ENCODE measurements at regions of chr19 and their contacts with region 1.

Region 1: DNA sequence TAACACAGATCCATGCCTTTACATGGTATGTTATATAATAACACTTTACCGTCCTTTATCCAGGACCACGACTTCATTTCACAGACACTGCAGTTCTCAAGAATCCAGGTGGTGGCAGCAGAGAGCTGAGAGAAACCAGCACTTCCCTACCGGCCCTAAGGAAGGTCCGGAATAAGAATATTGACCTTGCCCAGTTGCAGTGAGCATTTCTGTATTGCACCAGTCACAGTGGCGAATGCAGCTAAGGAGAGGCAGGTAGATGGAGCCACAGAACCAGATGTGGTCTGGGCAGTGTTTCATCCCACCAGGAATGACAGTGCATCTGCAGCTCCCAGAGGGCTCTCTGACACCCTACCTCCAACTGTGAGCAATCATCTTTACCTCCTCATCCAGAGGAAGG is 44.6 kb downstream of the ZNF787 start:
- DNase-seq: peak; percentile 48 to 83 (median 67)
- H3K4me3 ChIP-seq: no peak overlapping the region
- H3K27ac ChIP-seq: no peak overlapping the region
- H3K4me1 ChIP-seq: peaks cover 8% of the 10 kb centered on the region in 2 donors
- H3K27me3 ChIP-seq: no peaks in the 10 kb centered on the region
- CTCF ChIP-seq: peak; percentile 74 to 91 (median 86)
- POLR2A ChIP-seq: no peak

Region 2: DNA sequence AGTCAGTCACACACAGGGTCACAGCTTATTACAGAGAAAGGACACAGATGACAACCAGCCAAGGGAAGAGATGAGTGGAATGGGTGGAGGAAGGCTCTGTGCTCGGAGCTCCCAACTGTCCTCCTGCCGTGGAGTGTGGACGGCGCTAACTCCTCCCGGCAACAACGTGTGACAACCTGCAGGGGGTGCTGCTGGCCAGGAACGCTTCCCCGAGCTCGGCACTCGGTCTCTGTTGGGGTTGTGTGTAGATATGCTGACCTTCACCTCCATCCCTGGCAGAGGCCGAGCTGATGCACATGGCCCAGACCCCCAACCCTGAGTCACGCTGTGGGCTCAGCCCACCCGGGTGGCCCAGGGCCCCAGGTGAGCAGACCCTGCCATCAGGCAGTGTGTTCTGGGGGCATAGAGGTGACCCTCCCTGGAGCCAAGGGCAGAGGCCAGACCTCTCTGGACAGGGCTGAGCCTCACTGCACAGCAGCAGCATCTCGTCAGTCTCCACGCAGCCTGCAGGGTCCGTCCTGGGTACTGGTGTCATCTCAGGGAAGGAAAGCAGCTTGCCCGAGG is 78.7 kb after region 1 on chr19:
- intact Hi-C with region 1: loop called in 1 of 2 experiments (anchors 5 kb)
- DNase-seq: peak in 6 of 7 donors; percentile 48 to 68 (median 56)
- H3K4me3 ChIP-seq: no peak overlapping the region
- H3K27ac ChIP-seq: peak overlapping the region in 1 of 5 donors; percentile 9
- H3K4me1 ChIP-seq: peaks cover 4 to 10% of the 10 kb centered on the region in 2 donors
- H3K27me3 ChIP-seq: no peaks in the 10 kb centered on the region
- CTCF ChIP-seq: peak; percentile 20 to 63 (median 50)
- POLR2A ChIP-seq: no peak

Region 3: GRCh38 chr19:56170261-56170660 is 93.8 kb after region 1 on chr19:
- intact Hi-C with region 1: loop called in 1 of 2 experiments (anchors 5 kb)
- DNase-seq: peak; percentile 73 to 94 (median 86)
- H3K4me3 ChIP-seq: no peak overlapping the region
- H3K27ac ChIP-seq: peak overlapping the region in 1 of 5 donors; percentile 30
- H3K4me1 ChIP-seq: peaks cover 0 to 4% of the 10 kb centered on the region in 2 donors
- H3K27me3 ChIP-seq: no peaks in the 10 kb centered on the region
- CTCF ChIP-seq: no peak
- POLR2A ChIP-seq: no peak

Region 4: GRCh38 chr19:56252699-56253422 is 176.4 kb after region 1 on chr19:
- intact Hi-C with region 1: loop called (anchors 5 to 10 kb)
- DNase-seq: peak; percentile 80 to 91 (median 88)
- H3K4me3 ChIP-seq: no peak overlapping the region
- H3K27ac ChIP-seq: no peak overlapping the region
- H3K4me1 ChIP-seq: no peaks in the 10 kb centered on the region
- H3K27me3 ChIP-seq: no peaks in the 10 kb centered on the region
- CTCF ChIP-seq: peak; percentile 80 to 90 (median 88)
- POLR2A ChIP-seq: no peak

Region 5: GRCh38 chr19:56321989-56322440 is 245.5 kb after region 1 on chr19:
- intact Hi-C with region 1: loop called in 1 of 2 experiments (anchors 10 kb)
- DNase-seq: no peak
- H3K4me3 ChIP-seq: no peak overlapping the region
- H3K27ac ChIP-seq: peak overlapping the region in 2 of 5 donors; percentile 44 to 61
- H3K4me1 ChIP-seq: peaks cover 0 to 3% of the 10 kb centered on the region in 2 donors
- H3K27me3 ChIP-seq: no peaks in the 10 kb centered on the region
- CTCF ChIP-seq: no peak
- POLR2A ChIP-seq: no peak

Region 6: GRCh38 chr19:56350416-56351045 is 274.0 kb after region 1 on chr19:
- intact Hi-C with region 1: loop called in 1 of 2 experiments (anchors 10 kb)
- DNase-seq: peak in 6 of 7 donors; percentile 16 to 72 (median 44)
- H3K4me3 ChIP-seq: no peak overlapping the region
- H3K27ac ChIP-seq: no peak overlapping the region
- H3K4me1 ChIP-seq: no peaks in the 10 kb centered on the region
- H3K27me3 ChIP-seq: no peaks in the 10 kb centered on the region
- CTCF ChIP-seq: peak; percentile 55 to 87 (median 70)
- POLR2A ChIP-seq: no peak